ENCODE measurements at regions of chr14 and their contacts with region 1.

Region 1: GRCh38 chr14:35285168-35286002 is 6.8 kb upstream of the PSMA6 start:
- DNase-seq: peak; percentile 35
- H3K4me3 Mint-ChIP-seq: peak overlapping the region; percentile 48
- H3K27ac Mint-ChIP-seq: peak overlapping the region; percentile 96
- H3K4me1 Mint-ChIP-seq: peaks cover 50% of the 10 kb centered on the region
- H3K27me3 Mint-ChIP-seq: no peaks in the 10 kb centered on the region

Region 2: DNA sequence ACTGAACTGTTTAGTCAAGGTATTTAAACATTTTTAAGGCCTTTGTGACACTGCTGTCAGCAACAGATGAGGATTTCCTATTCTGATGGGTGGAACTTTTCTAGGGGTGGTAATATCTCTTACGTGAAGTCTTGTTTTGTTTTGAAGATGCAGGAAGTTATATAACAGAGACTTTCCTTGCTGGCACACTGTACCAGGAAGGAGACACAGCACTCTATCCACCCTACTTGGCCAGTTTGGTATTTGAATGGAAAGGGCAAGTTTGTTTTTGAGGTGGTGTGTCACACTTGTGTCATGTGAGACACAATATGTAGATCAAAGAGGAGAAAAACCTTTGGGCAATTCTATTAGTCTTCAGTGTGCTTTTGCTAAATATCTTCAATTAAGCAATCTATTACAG is 354.2 kb before region 1 on chr14:
- CTCF ChIA-PET with region 1: no interaction called
- POLR2A ChIA-PET with region 1: no interaction called
- intact Hi-C with region 1: loop called (anchors 5 kb)
- DNase-seq: peak; percentile 50
- H3K4me3 Mint-ChIP-seq: peak overlapping the region; percentile 64
- H3K27ac Mint-ChIP-seq: peak overlapping the region; percentile 92
- H3K4me1 Mint-ChIP-seq: peaks cover 46% of the 10 kb centered on the region
- H3K27me3 Mint-ChIP-seq: no peaks in the 10 kb centered on the region

Region 3: DNA sequence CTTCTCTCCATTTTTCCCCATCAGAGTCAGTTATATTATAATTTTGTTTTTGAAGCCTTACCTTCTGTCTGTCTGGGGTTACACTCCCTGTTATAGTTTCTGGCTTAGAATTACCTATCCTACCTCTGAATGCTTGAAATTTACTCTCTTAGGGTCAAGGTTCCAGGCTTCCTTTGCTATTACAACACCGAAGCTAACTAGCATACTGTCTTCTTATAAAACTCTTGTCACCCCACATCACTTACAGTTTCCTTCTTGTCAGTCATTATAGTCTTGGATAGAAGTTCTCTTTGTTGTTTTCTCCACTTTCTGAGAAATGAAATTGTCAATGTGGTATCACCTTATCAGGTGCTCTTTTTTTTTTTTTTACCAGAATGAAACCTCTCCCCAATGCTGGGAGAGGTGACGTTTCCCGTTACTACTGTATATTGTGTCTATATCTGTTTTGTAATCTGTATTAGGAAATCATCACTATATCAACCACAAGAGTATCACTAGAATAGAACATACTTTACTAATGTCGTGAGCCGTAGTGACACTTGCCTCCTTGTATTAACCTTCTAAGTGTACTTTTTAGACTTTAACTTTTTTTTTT is 62.4 kb before region 1 on chr14:
- CTCF ChIA-PET with region 1: no interaction called
- POLR2A ChIA-PET with region 1: interaction called, 4 read pairs
- intact Hi-C with region 1: loop called (anchors 2 kb)
- DNase-seq: no peak
- H3K4me3 Mint-ChIP-seq: no peak overlapping the region
- H3K27ac Mint-ChIP-seq: peak overlapping the region; percentile 39
- H3K4me1 Mint-ChIP-seq: peaks cover 38% of the 10 kb centered on the region
- H3K27me3 Mint-ChIP-seq: no peaks in the 10 kb centered on the region

Region 4: DNA sequence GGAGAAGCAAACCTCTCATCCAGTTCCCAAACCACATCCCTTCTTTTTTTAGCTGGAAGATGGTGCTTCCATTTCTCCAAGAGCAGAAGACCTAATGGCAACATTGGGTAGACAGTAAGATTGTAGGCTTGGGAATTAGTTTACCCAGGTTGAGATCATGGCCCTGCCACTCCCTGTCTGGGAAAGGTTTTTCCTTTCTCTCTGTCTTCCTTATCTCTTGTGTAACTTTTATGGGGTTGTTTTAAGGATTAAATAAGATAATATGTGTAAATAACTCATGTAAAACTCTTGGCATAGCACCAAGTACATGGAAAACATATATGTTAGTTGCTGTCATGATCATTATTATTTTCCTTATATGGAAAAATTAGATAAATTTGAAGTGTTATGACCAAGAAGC is 16.4 kb before region 1 on chr14:
- CTCF ChIA-PET with region 1: no interaction called
- POLR2A ChIA-PET with region 1: no interaction called
- intact Hi-C with region 1: no loop called
- DNase-seq: no peak
- H3K4me3 Mint-ChIP-seq: no peak overlapping the region
- H3K27ac Mint-ChIP-seq: no peak overlapping the region
- H3K4me1 Mint-ChIP-seq: no peaks in the 10 kb centered on the region
- H3K27me3 Mint-ChIP-seq: no peaks in the 10 kb centered on the region

Region 5: GRCh38 chr14:35301735-35302528 is 16.5 kb after region 1 on chr14:
- CTCF ChIA-PET with region 1: interaction called, 3 read pairs
- POLR2A ChIA-PET with region 1: interaction called, 4 read pairs
- intact Hi-C with region 1: loop called (anchors 1 kb)
- DNase-seq: no peak
- H3K4me3 Mint-ChIP-seq: peak overlapping the region; percentile 49
- H3K27ac Mint-ChIP-seq: peak overlapping the region; percentile 95
- H3K4me1 Mint-ChIP-seq: peaks cover 73% of the 10 kb centered on the region
- H3K27me3 Mint-ChIP-seq: no peaks in the 10 kb centered on the region

Region 6: GRCh38 chr14:35355981-35356841 is 70.8 kb after region 1 on chr14:
- CTCF ChIA-PET with region 1: interaction called, 3 read pairs
- POLR2A ChIA-PET with region 1: interaction called, 16 read pairs
- intact Hi-C with region 1: loop called (anchors 1 kb)
- DNase-seq: peak; percentile 76
- H3K4me3 Mint-ChIP-seq: peak overlapping the region; percentile 17
- H3K27ac Mint-ChIP-seq: peak overlapping the region; percentile 79
- H3K4me1 Mint-ChIP-seq: peaks cover 40% of the 10 kb centered on the region
- H3K27me3 Mint-ChIP-seq: no peaks in the 10 kb centered on the region